SK-N-SH (cell line): ENCODE measurements at regions of chr12 and their contacts with region 1.

Region 1: GRCh38 chr12:109597795-109598427 is 24.3 kb downstream of the MVK start:
- DNase-seq: peak; percentile 94
- H3K4me3 ChIP-seq: peak overlapping the region; percentile 6 to 51; a peak in 1 of 4 replicates
- H3K27ac ChIP-seq: peak overlapping the region in 1 of 2 experiments; percentile 75; a peak in 2 of 4 replicates
- H3K4me1 ChIP-seq: peaks cover 0 to 29% of the 10 kb centered on the region in 2 experiments; a peak in 2 of 4 replicates
- H3K27me3 ChIP-seq: no peaks in the 10 kb centered on the region
- CTCF ChIP-seq: peak; percentile 96
- EP300 ChIP-seq: no peak
- RAD21 ChIP-seq: peak; percentile 91

Region 2: GRCh38 chr12:109362471-109362870 is 235.4 kb before region 1 on chr12:
- CTCF ChIA-PET with region 1: no interaction called
- POLR2A ChIA-PET with region 1: no interaction called
- DNase-seq: no peak
- H3K4me3 ChIP-seq: no peak overlapping the region
- H3K27ac ChIP-seq: no peak overlapping the region
- H3K4me1 ChIP-seq: peaks cover 0 to 6% of the 10 kb centered on the region in 2 experiments; a peak in 2 of 4 replicates
- H3K27me3 ChIP-seq: no peaks in the 10 kb centered on the region
- CTCF ChIP-seq: no peak
- EP300 ChIP-seq: no peak
- RAD21 ChIP-seq: no peak

Region 3: DNA sequence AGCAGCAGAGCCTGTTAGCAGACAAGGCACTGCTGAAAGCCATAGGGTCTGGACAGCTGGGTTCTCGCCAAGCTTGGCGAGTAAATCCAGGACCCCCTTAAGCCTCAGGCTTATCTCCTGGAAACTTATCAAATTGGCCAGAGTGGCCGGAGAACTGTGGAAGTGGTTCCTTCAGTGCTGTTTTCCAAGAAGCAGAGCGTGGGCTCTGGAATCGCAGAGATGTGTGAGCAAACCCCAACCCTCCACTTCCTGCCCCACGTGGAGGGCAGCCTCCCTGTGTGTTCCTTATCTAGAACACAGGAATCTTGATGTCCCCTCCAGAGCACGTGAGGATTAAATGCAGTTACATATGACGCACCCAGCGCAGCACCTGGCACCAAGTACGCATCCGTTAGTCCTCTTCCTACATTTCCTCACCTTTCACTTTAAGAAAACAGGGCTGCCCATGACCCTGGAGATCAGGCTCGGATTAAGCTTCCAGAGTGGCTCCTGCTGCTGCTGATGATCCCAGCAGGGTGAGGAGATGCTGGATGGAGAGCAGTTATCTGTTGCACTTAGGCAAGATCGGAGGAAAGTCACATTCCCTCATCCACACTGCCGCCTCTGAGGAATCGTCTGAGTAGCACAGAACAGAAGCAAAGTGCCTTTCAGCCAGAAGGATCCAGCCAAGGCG is 59.6 kb before region 1 on chr12:
- CTCF ChIA-PET with region 1: interaction called, 14 read pairs
- POLR2A ChIA-PET with region 1: no interaction called
- DNase-seq: peak; percentile 88
- H3K4me3 ChIP-seq: no peak overlapping the region
- H3K27ac ChIP-seq: peak overlapping the region in 1 of 2 experiments; percentile 95; a peak in 2 of 4 replicates
- H3K4me1 ChIP-seq: peaks cover 6 to 75% of the 10 kb centered on the region in 2 experiments; a peak in 3 of 4 replicates
- H3K27me3 ChIP-seq: no peaks in the 10 kb centered on the region
- CTCF ChIP-seq: no peak
- EP300 ChIP-seq: peak in 1 of 2 experiments; percentile 95; a peak in 2 of 4 replicates
- RAD21 ChIP-seq: peak; percentile 30; the same call in 1 of the 2 replicates

Region 4: GRCh38 chr12:109549613-109550270 is 48.2 kb before region 1 on chr12:
- CTCF ChIA-PET with region 1: no interaction called
- POLR2A ChIA-PET with region 1: no interaction called
- DNase-seq: no peak
- H3K4me3 ChIP-seq: no peak overlapping the region
- H3K27ac ChIP-seq: no peak overlapping the region
- H3K4me1 ChIP-seq: peaks cover 0 to 30% of the 10 kb centered on the region in 2 experiments; a peak in 1 of 4 replicates
- H3K27me3 ChIP-seq: no peaks in the 10 kb centered on the region
- CTCF ChIP-seq: no peak
- EP300 ChIP-seq: no peak
- RAD21 ChIP-seq: no peak

Region 5: GRCh38 chr12:109621211-109621694 is 23.3 kb after region 1 on chr12:
- CTCF ChIA-PET with region 1: interaction called, 33 read pairs
- POLR2A ChIA-PET with region 1: interaction called, 5 read pairs
- DNase-seq: no peak
- H3K4me3 ChIP-seq: no peak overlapping the region
- H3K27ac ChIP-seq: peak overlapping the region in 1 of 2 experiments; percentile 93; a peak in 2 of 4 replicates
- H3K4me1 ChIP-seq: peaks cover 0 to 82% of the 10 kb centered on the region in 2 experiments; a peak in 3 of 4 replicates
- H3K27me3 ChIP-seq: peaks cover 23% of the 10 kb centered on the region; the same call in 1 of the 2 replicates
- CTCF ChIP-seq: no peak
- EP300 ChIP-seq: peak in 1 of 2 experiments; percentile 31; a peak in 1 of 4 replicates
- RAD21 ChIP-seq: no peak

Region 6: GRCh38 chr12:109701064-109701463 is 103.2 kb after region 1 on chr12:
- CTCF ChIA-PET with region 1: interaction called, 27 read pairs
- POLR2A ChIA-PET with region 1: no interaction called
- DNase-seq: peak; percentile 78
- H3K4me3 ChIP-seq: no peak overlapping the region
- H3K27ac ChIP-seq: peak overlapping the region in 1 of 2 experiments; percentile 86; a peak in 2 of 4 replicates
- H3K4me1 ChIP-seq: peaks cover 0 to 33% of the 10 kb centered on the region in 2 experiments; a peak in 2 of 4 replicates
- H3K27me3 ChIP-seq: no peaks in the 10 kb centered on the region
- CTCF ChIP-seq: no peak
- EP300 ChIP-seq: peak in 1 of 2 experiments; percentile 70; a peak in 2 of 4 replicates
- RAD21 ChIP-seq: peak; percentile 2; the same call in 1 of the 2 replicates

Region 7: DNA sequence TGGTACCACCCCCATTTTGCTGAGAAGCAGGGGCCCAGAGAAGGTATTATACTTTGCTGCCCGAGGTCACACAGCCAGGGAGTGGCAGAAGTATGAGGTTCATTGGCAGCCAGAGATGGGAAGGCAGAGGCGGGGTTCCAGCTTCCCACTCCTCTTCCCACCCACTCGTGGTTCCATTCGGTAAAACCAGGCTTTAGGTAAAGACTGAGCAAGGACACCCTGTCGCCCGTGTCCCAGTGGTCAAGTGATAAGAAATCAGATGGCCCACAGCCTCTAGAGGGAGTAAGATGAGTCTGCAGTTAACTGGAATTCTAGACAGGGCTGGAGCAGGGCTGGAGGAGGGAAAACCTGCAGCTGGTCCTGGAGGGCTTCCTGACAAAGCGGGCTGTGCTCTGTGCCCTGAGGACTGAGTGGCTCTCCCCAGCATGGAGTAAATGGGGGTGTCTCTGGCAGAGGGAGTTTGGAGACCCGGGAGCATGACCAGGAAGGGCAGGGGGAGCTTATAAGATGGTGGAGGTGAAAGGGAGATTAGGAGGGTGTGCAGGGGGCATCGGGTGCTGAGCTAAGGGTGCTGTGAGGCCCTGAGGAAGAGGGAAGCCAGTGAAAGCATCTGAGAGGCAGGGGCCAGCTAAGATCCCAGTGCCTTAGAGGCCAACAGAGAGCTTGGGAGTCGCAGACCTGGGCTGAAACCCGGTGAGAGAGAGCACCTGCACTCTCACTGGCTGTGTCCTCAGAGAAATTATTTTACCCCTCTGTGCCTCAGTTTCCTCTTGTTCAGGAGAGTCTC is 121.5 kb after region 1 on chr12:
- CTCF ChIA-PET with region 1: interaction called, 175 read pairs
- POLR2A ChIA-PET with region 1: interaction called, 14 read pairs
- DNase-seq: peak; percentile 72
- H3K4me3 ChIP-seq: peak overlapping the region in 1 of 2 experiments; percentile 62; a peak in 1 of 4 replicates
- H3K27ac ChIP-seq: peak overlapping the region in 1 of 2 experiments; percentile 92; a peak in 2 of 4 replicates
- H3K4me1 ChIP-seq: peaks cover 0 to 90% of the 10 kb centered on the region in 2 experiments; a peak in 2 of 4 replicates
- H3K27me3 ChIP-seq: no peaks in the 10 kb centered on the region; the same call in none of the 2 replicates
- CTCF ChIP-seq: peak; percentile 40
- EP300 ChIP-seq: no peak; a peak in 1 of 4 replicates
- RAD21 ChIP-seq: peak; percentile 62

Region 8: DNA sequence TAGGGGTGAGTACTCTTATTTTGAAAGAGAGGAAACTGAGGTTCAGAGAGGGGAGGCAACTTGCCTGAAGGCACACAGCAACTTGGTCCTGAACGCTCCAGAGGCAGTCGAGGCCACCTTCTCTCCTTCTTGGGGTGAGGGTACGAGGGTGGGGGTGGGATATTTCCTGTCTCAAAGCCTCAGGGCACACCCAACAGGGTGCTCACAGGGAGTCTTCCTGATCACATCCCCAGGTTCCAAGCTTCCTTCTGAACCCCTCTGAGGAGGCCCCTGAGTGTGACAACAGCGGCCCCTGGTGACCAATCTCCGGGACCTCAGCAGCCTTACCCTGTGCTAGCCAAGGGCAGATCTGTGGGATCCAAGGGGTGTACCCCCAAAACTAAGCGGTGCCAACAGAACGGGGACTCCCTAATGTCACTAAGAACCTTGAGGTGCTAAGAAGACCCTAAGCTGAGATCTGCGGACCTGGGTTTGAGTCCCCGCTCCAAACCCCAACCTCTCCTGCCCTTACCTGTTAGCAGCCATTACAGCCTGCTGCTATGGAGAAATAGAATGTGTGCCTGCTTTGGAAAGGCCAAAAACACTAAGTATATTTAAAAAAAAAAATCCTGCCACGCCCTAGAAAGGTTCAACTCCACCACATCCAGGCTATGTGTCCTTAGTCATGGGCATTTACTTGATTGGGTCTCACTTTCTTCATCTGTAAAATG is 177.4 kb after region 1 on chr12:
- CTCF ChIA-PET with region 1: interaction called, 55 read pairs
- POLR2A ChIA-PET with region 1: no interaction called
- DNase-seq: peak; percentile 76
- H3K4me3 ChIP-seq: peak overlapping the region in 1 of 2 experiments; percentile 17; a peak in 1 of 4 replicates
- H3K27ac ChIP-seq: no peak overlapping the region
- H3K4me1 ChIP-seq: peaks cover 0 to 5% of the 10 kb centered on the region in 2 experiments; a peak in 1 of 4 replicates
- H3K27me3 ChIP-seq: no peaks in the 10 kb centered on the region
- CTCF ChIP-seq: peak; percentile 86
- EP300 ChIP-seq: no peak
- RAD21 ChIP-seq: peak; percentile 79

Region 9: DNA sequence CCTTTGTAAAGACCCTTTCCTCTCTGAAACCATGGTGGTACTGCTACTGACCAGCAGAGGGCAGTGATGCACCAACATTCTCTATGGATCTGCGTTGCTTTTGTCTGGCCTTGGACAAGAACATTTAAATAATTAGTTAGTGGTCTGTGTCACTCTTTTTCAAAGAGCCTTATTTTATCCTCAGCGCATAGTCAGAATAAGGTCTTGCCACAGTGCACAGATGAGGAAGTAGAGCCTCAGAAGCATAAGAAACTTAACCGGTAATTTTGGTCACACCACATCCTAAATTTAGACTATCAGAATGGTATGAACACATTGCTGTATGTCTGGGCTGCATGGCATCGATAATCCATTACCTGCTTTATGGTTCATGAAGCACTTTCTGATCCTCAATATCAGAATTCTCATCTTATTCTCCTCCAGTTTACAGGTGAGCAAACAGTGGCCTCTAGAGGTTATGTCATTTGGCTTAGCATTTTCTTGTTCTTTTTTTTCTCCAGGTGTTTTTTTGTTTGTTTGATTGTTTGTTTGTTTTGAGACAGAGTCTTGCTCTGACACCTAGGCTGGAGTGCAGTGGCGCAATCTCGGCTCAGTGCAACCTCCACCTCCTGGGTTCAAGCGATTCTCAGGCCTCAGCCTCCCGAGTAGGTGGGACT is 502.5 kb after region 1 on chr12:
- CTCF ChIA-PET with region 1: no interaction called
- POLR2A ChIA-PET with region 1: no interaction called
- DNase-seq: peak; percentile 65
- H3K4me3 ChIP-seq: no peak overlapping the region; a peak in 1 of 4 replicates
- H3K27ac ChIP-seq: no peak overlapping the region
- H3K4me1 ChIP-seq: no peaks in the 10 kb centered on the region
- H3K27me3 ChIP-seq: no peaks in the 10 kb centered on the region
- CTCF ChIP-seq: peak; percentile 96
- EP300 ChIP-seq: no peak
- RAD21 ChIP-seq: peak; percentile 96